GM13976 (cell line): ENCODE measurements at regions of chr6 and their contacts with region 1.

Region 1: DNA sequence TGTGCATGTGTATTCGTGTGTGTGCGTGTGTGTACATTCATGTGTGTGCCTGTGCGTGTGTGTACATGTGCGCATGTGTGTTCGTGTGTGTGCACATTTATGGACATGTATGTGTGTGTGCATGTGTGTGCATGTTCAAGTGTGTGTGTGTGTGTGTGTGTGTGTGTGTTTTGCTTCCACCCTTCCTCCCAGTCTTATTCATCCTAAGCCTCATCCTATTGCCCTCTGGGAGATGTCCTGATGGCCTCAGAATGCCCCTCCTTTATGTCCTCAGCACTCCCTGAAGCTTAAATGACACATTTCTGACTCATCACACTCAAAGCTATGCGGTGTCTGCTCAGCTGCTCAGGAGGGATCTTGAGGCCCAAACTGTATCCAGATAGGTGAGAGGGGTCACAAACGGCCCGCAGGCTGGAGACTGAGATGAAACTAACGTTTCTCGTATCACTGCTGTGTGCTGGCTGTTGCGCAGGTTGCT is 76.7 kb upstream of the CCDC167 start:
- DNase-seq: no peak
- CTCF ChIP-seq: no peak

Region 2: DNA sequence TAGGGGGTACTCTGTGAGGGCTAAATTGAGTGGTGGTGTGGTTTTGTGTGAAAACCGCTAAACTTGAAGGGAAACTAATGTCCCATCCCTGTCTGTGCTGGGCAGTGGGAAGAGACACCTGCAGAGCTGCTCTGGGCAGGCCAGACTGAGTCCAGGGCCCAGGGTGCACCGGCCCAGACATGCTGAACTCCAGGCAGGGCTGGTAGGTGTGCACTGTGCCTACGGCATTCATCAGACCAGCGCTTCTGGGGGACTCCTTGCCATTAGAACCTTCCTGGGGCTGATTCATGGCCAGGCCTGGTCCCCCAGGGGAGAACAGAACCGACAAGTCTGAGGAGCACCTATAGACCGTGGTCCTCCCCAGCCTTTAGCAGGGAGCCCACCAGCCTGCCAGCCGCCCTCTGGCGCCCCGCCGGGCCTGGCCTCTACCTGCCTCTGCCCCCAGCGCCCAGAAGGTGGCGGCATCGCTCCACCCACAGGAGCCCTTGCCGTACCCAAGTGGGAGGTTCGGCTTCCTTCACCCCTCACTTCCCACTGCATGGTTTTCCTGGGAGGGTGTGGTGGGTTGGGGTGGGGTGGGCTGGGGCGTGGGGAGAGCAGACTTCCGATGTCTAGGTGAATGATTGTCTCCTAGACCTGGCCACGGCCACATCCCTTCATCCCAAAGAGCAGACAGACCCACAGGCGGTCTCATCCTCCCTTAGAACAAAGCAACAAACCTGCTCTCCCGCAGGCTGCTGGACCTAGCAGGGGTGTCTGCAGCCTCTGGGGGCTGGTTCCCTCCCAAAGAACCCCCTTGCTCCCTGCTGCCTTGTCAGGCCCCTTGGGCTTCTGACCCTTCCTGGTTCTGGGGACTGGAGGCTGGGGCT is 92.2 kb before region 1 on chr6:
- in situ Hi-C with region 1: loop called (anchors 10 kb)
- DNase-seq: peak; percentile 90
- CTCF ChIP-seq: peak; percentile 95